Caco-2 (cell line): ENCODE measurements at regions of chr6 and their contacts with region 1.

Region 1: DNA sequence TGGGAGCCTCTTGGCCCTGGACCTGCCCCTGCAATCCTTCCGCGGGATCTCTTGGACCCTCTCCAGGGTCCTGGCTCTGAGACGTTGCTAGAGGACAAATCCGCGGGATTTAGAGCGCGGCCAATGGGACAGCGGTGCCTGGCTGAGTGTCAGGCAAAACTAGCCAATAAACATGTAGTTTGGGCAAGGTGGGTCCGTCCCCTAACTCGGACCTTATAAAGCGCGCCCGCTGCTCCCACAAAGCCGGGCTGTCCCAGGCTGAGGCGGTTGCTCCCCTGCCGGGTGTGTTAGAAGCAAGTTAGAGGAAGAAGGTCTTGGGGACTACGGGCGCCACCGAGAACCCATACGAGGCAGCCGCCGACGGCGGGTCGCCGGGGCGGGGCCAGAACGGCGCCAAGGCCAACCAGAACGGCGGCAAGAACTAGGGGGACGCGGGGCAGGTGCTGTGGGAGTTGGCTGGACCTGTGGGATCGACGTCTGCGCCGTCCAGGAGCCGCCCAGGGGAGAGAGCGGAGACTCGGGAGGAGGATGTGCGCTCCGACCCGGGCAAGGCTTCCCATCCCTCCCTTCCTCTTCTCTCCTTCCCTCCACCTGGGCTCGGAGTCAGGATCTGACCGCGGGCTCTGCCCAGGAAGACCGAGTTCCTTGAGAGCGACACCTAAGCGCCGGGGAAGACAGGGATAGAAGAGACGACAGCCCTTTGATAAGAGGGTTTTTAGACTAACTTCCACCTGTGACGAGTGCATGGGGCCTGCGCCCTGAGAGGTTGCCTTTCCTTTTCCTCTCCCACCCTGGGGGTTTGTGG is 6.5 kb upstream of the TMEM14A start:
- DNase-seq: peak; percentile 93 to 96
- H3K4me3 ChIP-seq: peak overlapping the region; percentile 92
- H3K4me3 Mint-ChIP-seq: no peak overlapping the region
- H3K27ac Mint-ChIP-seq: no peak overlapping the region
- H3K4me1 ChIP-seq: no peaks in the 10 kb centered on the region
- H3K4me1 Mint-ChIP-seq: no peaks in the 10 kb centered on the region
- H3K27me3 ChIP-seq: no peaks in the 10 kb centered on the region
- H3K27me3 Mint-ChIP-seq: no peaks in the 10 kb centered on the region
- CTCF ChIP-seq: no peak

Region 2: GRCh38 chr6:52022675-52023074 is 641.7 kb before region 1 on chr6:
- CTCF ChIA-PET with region 1: no interaction called
- POLR2A ChIA-PET with region 1: no interaction called
- intact Hi-C with region 1: no loop called
- DNase-seq: no peak
- H3K4me3 ChIP-seq: no peak overlapping the region
- H3K4me3 Mint-ChIP-seq: no peak overlapping the region
- H3K27ac Mint-ChIP-seq: no peak overlapping the region
- H3K4me1 ChIP-seq: peaks cover 15% of the 10 kb centered on the region
- H3K4me1 Mint-ChIP-seq: peaks cover 12% of the 10 kb centered on the region
- H3K27me3 ChIP-seq: no peaks in the 10 kb centered on the region
- H3K27me3 Mint-ChIP-seq: no peaks in the 10 kb centered on the region
- CTCF ChIP-seq: no peak

Region 3: GRCh38 chr6:52407467-52407866 is 256.9 kb before region 1 on chr6:
- CTCF ChIA-PET with region 1: interaction called, 14 read pairs
- POLR2A ChIA-PET with region 1: interaction called, 10 read pairs
- intact Hi-C with region 1: loop called (anchors 1 kb)
- DNase-seq: peak in 1 of 2 experiments; percentile 50
- H3K4me3 ChIP-seq: no peak overlapping the region
- H3K4me3 Mint-ChIP-seq: no peak overlapping the region
- H3K27ac Mint-ChIP-seq: no peak overlapping the region
- H3K4me1 ChIP-seq: no peaks in the 10 kb centered on the region
- H3K4me1 Mint-ChIP-seq: peaks cover 2% of the 10 kb centered on the region
- H3K27me3 ChIP-seq: no peaks in the 10 kb centered on the region
- H3K27me3 Mint-ChIP-seq: no peaks in the 10 kb centered on the region
- CTCF ChIP-seq: peak; percentile 45 to 51

Region 4: GRCh38 chr6:52497652-52498408 is 166.6 kb before region 1 on chr6:
- CTCF ChIA-PET with region 1: interaction called, 3 read pairs
- POLR2A ChIA-PET with region 1: no interaction called
- intact Hi-C with region 1: loop called (anchors 5 kb)
- DNase-seq: no peak
- H3K4me3 ChIP-seq: no peak overlapping the region
- H3K4me3 Mint-ChIP-seq: no peak overlapping the region
- H3K27ac Mint-ChIP-seq: no peak overlapping the region
- H3K4me1 ChIP-seq: no peaks in the 10 kb centered on the region
- H3K4me1 Mint-ChIP-seq: no peaks in the 10 kb centered on the region
- H3K27me3 ChIP-seq: no peaks in the 10 kb centered on the region
- H3K27me3 Mint-ChIP-seq: no peaks in the 10 kb centered on the region
- CTCF ChIP-seq: no peak

Region 5: DNA sequence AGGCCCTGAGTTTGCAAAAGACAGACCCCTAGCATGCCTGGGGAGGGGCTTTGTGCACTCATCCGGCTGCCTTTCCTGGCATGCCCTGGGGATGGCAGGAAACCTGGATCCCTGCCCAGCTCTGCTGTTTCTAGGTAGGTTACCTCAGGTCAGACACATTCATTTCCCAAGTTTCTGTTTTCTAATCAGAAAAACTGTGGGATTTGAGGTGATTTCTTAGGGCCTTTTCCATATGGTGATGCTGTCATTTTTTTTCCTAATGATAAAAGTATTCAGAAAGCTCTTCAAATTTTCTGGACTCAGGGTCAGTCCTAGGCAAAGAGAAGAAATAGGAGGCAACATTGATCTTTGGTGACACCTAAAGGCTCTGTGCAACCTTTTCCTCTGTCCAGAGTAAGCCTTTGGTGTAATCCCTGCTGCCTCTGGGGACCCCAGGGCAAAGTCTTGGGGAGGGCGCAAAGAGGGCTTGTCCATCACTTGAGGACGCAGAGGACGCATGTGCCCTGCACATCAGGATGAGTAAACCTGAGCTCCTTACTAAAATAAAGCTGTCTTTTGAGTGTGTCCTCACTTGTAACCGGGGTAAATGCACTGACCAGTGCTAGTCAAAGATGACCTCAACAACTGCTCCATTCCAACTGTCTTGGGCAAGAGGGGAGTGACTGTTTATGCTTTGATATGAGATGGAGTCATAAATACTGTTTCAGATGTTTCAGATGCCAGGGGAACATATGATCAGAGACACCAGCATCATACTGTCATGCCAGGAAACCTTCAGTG is 74.0 kb before region 1 on chr6:
- CTCF ChIA-PET with region 1: interaction called, 4 read pairs
- POLR2A ChIA-PET with region 1: no interaction called
- intact Hi-C with region 1: loop called (anchors 1 kb)
- DNase-seq: peak in 1 of 2 experiments; percentile 58
- H3K4me3 ChIP-seq: no peak overlapping the region
- H3K4me3 Mint-ChIP-seq: no peak overlapping the region
- H3K27ac Mint-ChIP-seq: peak overlapping the region; percentile 10
- H3K4me1 ChIP-seq: peaks cover 41% of the 10 kb centered on the region
- H3K4me1 Mint-ChIP-seq: peaks cover 40% of the 10 kb centered on the region
- H3K27me3 ChIP-seq: no peaks in the 10 kb centered on the region
- H3K27me3 Mint-ChIP-seq: no peaks in the 10 kb centered on the region
- CTCF ChIP-seq: peak; percentile 31 to 54

Region 6: GRCh38 chr6:52647199-52647598 is 17.2 kb before region 1 on chr6:
- CTCF ChIA-PET with region 1: interaction called, 19 read pairs
- POLR2A ChIA-PET with region 1: no interaction called
- intact Hi-C with region 1: loop called (anchors 1 kb)
- DNase-seq: no peak
- H3K4me3 ChIP-seq: no peak overlapping the region
- H3K4me3 Mint-ChIP-seq: no peak overlapping the region
- H3K27ac Mint-ChIP-seq: no peak overlapping the region
- H3K4me1 ChIP-seq: no peaks in the 10 kb centered on the region
- H3K4me1 Mint-ChIP-seq: peaks cover 7% of the 10 kb centered on the region
- H3K27me3 ChIP-seq: no peaks in the 10 kb centered on the region
- H3K27me3 Mint-ChIP-seq: no peaks in the 10 kb centered on the region
- CTCF ChIP-seq: no peak

Region 7: DNA sequence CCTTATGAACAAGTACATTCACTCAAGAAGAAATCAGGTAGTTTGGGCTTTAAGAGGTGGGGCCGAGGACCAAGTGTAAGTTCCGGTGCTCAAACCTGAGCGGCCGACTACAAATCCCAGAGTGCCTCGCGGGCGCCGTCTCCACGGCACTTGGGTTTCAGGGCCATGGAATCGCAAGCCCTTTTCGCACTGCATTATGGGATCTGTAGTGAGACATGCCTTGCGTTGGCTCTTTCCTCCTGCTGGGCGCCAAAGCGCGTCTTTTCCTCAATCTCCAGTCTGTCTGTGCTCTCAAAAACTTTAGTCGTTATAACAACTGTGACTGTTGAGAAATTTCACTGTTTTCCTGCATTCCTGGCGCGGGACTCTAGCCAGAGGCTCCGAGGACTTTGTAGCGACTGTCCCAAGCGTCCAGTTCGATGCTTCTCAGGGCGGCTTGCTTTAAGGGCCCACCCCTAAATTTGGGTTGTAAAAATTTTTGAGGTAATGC is 400.4 kb after region 1 on chr6:
- CTCF ChIA-PET with region 1: no interaction called
- POLR2A ChIA-PET with region 1: no interaction called
- intact Hi-C with region 1: loop called (anchors 2 kb)
- DNase-seq: peak; percentile 94 to 95
- H3K4me3 ChIP-seq: peak overlapping the region; percentile 76
- H3K4me3 Mint-ChIP-seq: peak overlapping the region; percentile 97
- H3K27ac Mint-ChIP-seq: peak overlapping the region; percentile 87
- H3K4me1 ChIP-seq: 0 out of 2 replicates have a peak, but pooled peaks cover 7% of the 10 kb centered on the region
- H3K4me1 Mint-ChIP-seq: peaks cover 24% of the 10 kb centered on the region
- H3K27me3 ChIP-seq: no peaks in the 10 kb centered on the region
- H3K27me3 Mint-ChIP-seq: no peaks in the 10 kb centered on the region
- CTCF ChIP-seq: peak in 1 of 2 experiments; percentile 12